ENCODE measurements at regions of chr5 and their contacts with region 1.

Region 1: DNA sequence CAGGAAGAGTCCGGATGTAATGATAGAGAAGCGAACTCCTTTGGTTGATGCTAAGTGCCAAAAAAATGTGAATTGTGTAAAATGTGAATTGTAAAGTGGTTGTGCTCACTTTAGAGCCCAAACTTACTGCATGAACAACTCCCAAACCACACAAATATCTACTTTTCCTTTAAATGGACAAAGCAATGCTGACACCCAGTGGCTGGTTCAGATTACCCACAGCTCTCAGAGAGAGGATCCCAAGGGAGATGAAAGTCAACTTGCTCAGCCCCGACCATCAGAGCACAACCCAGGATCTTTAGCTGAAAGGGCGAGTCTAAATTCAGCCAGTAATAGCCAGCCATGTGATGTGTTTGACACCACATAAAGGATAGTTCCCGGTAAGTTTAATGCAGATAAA is 133.7 kb downstream of the NMUR2 start:
- DNase-seq: peak; percentile 52
- H3K4me3 Mint-ChIP-seq: no peak overlapping the region
- H3K27ac Mint-ChIP-seq: no peak overlapping the region
- H3K4me1 Mint-ChIP-seq: no peaks in the 10 kb centered on the region
- H3K27me3 Mint-ChIP-seq: peaks cover 9% of the 10 kb centered on the region
- CTCF ChIP-seq: peak; percentile 50

Region 2: DNA sequence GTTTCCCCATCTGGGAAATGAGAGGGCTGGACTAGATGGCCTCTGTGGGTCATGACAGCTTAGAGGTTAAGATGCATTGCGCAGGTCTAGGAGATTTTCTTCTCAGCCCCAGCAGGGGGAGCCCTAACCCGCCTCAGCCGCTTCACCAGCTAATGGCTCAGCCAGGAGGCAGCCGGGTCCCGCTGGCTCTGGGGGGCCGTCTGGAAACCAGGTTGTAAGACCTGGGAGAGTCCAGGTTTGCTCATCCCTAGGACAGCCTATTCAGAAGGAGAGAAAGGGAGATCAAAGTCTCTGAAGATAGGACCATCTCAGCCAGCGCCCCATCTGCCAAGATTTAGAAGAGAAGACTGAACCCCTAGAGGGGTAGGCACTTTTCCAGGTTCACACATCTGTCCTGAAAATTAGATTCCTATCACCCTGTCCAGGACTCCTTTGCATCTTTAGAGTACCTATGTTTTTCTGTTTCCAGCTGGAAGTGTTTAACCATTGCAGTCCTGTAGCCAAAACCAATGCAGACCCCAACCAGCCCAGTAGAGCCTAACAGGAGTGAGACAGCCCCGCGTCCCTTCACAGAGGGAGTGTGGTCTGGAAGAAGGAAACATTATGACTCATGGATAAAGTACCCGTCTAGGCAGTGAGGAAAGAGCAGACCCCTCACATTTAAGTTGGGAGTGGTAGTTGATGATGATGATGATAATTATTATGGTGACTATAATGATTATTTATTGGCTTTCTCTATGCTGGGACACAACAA is 612.2 kb before region 1 on chr5:
- CTCF ChIA-PET with region 1: no interaction called
- intact Hi-C with region 1: loop called (anchors 1 kb)
- DNase-seq: peak; percentile 93
- H3K4me3 Mint-ChIP-seq: no peak overlapping the region
- H3K27ac Mint-ChIP-seq: no peak overlapping the region
- H3K4me1 Mint-ChIP-seq: peaks cover 17% of the 10 kb centered on the region
- H3K27me3 Mint-ChIP-seq: peaks cover 22% of the 10 kb centered on the region
- CTCF ChIP-seq: peak; percentile 90

Region 3: GRCh38 chr5:151696470-151697061 is 574.9 kb before region 1 on chr5:
- CTCF ChIA-PET with region 1: no interaction called
- intact Hi-C with region 1: no loop called
- DNase-seq: no peak
- H3K4me3 Mint-ChIP-seq: no peak overlapping the region
- H3K27ac Mint-ChIP-seq: no peak overlapping the region
- H3K4me1 Mint-ChIP-seq: peaks cover 20% of the 10 kb centered on the region
- H3K27me3 Mint-ChIP-seq: no peaks in the 10 kb centered on the region
- CTCF ChIP-seq: no peak

Region 4: DNA sequence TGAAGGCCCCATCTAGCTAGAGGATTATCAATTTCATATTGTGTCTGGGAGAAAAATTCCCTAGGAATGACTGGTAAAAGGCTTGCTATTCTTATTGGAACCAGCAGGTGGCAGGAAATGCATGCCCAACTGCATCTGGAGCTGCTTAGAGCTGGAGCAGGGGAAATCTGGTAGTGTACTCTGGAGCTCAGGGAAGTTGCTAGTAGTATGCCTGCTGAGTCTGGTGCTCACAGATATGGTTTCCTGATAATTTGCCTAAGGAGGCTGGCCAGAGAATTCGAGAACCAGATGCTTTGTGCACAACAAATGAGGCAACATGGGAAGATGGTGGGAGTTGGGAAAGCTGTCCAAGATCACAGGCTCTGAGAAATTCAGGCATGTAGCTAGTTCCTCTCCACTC is 446.0 kb before region 1 on chr5:
- CTCF ChIA-PET with region 1: interaction called, 7 read pairs
- intact Hi-C with region 1: loop called (anchors 1 kb)
- DNase-seq: peak; percentile 70
- H3K4me3 Mint-ChIP-seq: no peak overlapping the region
- H3K27ac Mint-ChIP-seq: peak overlapping the region; percentile 19
- H3K4me1 Mint-ChIP-seq: peaks cover 11% of the 10 kb centered on the region
- H3K27me3 Mint-ChIP-seq: no peaks in the 10 kb centered on the region
- CTCF ChIP-seq: peak; percentile 90

Region 5: GRCh38 chr5:152142840-152143469 is 128.5 kb before region 1 on chr5:
- CTCF ChIA-PET with region 1: interaction called, 5 read pairs
- intact Hi-C with region 1: loop called (anchors 5 kb)
- DNase-seq: peak; percentile 76
- H3K4me3 Mint-ChIP-seq: no peak overlapping the region
- H3K27ac Mint-ChIP-seq: no peak overlapping the region
- H3K4me1 Mint-ChIP-seq: no peaks in the 10 kb centered on the region
- H3K27me3 Mint-ChIP-seq: peaks cover 24% of the 10 kb centered on the region
- CTCF ChIP-seq: peak; percentile 87

Region 6: DNA sequence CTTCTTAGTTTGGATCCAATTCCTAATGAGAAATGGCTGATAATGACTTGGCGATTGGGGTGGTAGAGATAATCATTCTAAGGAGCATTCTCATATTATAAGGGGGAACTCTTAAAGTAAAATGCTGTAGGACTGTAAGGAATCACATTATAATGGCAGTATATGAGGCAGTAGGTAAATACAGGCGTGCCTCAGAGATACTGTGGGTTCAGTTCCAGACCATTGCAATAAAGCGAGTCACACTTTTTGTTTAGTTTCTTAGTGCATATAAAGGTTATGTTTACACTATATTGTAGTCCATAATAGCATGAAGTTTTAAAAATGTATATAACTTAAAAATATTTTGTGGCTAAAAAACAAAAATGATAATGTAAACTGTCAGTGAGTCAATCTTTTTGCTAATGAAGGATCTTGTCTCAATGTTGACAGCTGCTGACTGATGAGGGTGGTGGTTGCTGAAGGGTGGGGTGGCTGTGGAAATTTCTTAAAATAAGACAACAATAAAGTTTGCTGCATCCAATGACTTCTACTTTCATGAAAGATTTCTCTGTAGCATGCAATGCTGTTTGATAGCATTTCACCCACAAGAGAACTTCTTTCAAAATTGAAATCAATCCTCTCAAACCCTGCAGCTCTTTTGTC is 117.9 kb after region 1 on chr5:
- CTCF ChIA-PET with region 1: no interaction called
- intact Hi-C with region 1: no loop called
- DNase-seq: no peak
- H3K4me3 Mint-ChIP-seq: no peak overlapping the region
- H3K27ac Mint-ChIP-seq: no peak overlapping the region
- H3K4me1 Mint-ChIP-seq: peaks cover 59% of the 10 kb centered on the region
- H3K27me3 Mint-ChIP-seq: no peaks in the 10 kb centered on the region
- CTCF ChIP-seq: no peak

Region 7: GRCh38 chr5:152505442-152506042 is 234.1 kb after region 1 on chr5:
- CTCF ChIA-PET with region 1: no interaction called
- intact Hi-C with region 1: loop called (anchors 5 kb)
- DNase-seq: peak; percentile 73
- H3K4me3 Mint-ChIP-seq: no peak overlapping the region
- H3K27ac Mint-ChIP-seq: no peak overlapping the region
- H3K4me1 Mint-ChIP-seq: peaks cover 48% of the 10 kb centered on the region
- H3K27me3 Mint-ChIP-seq: no peaks in the 10 kb centered on the region
- CTCF ChIP-seq: peak; percentile 79

Measured in Calu3 (cell line).